GM12878 (cell line): ENCODE measurements at regions of chr6 and their contacts with region 1.

Region 1: GRCh38 chr6:399785-400534 is 8.4 kb downstream of the IRF4 start:
- DNase-seq: no peak
- ATAC-seq: peak; percentile 10
- H3K4me3 ChIP-seq: peak overlapping the region; percentile 61
- H3K27ac ChIP-seq: peak overlapping the region; percentile 39
- H3K4me1 ChIP-seq: peaks cover 35% of the 10 kb centered on the region
- H3K27me3 ChIP-seq: no peaks in the 10 kb centered on the region
- CTCF ChIP-seq: no peak
- EP300 ChIP-seq: peak; percentile 56 to 84; a peak in 2 of 4 replicates
- POLR2A ChIP-seq: peak; percentile 89
- RAD21 ChIP-seq: 0 out of 2 replicates have a peak, but pooled peaks have one; percentile 1

Region 2: GRCh38 chr6:168865-169455 is 231.0 kb before region 1 on chr6:
- CTCF ChIA-PET with region 1: no interaction called
- POLR2A ChIA-PET with region 1: no interaction called
- RAD21 ChIA-PET with region 1: no interaction called
- SMC1A ChIA-PET with region 1: no interaction called
- in situ Hi-C with region 1: no loop called
- intact Hi-C with region 1: no loop called
- DNase-seq: no peak
- ATAC-seq: peak; percentile 71
- H3K4me3 ChIP-seq: no peak overlapping the region
- H3K27ac ChIP-seq: no peak overlapping the region
- H3K4me1 ChIP-seq: no peaks in the 10 kb centered on the region
- H3K27me3 ChIP-seq: no peaks in the 10 kb centered on the region
- CTCF ChIP-seq: peak; percentile 43 to 61 (median 56); a peak in 5 of 6 replicates
- EP300 ChIP-seq: no peak
- POLR2A ChIP-seq: no peak
- RAD21 ChIP-seq: peak; percentile 79

Region 3: DNA sequence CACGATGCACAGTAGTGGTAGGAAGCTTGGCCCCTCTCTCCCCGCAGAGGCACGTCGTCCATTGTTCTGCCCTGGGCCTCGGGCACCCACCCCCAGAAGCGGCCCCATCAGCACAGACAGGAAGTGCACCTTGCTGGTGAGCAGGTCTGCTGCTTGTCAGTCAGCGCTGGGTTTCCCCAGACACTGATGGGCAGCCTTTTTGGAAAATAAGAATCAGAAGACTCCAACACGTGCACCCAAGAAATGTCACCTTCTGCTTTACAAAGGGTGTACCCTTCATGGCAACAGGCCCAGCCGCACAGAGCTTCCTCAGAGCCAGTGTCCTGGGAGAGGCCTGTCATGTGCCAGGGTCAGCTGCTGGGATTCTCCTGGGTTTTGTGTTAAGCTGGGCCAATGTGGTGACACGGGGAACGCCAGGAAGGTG is 43.1 kb before region 1 on chr6:
- CTCF ChIA-PET with region 1: no interaction called
- POLR2A ChIA-PET with region 1: interaction called, 3 read pairs
- RAD21 ChIA-PET with region 1: interaction called, 11 read pairs
- SMC1A ChIA-PET with region 1: interaction called, 9 read pairs
- in situ Hi-C with region 1: no loop called
- intact Hi-C with region 1: no loop called
- DNase-seq: no peak
- ATAC-seq: peak; percentile 80
- H3K4me3 ChIP-seq: no peak overlapping the region
- H3K27ac ChIP-seq: peak overlapping the region; percentile 56
- H3K4me1 ChIP-seq: peaks cover 45% of the 10 kb centered on the region
- H3K27me3 ChIP-seq: no peaks in the 10 kb centered on the region
- CTCF ChIP-seq: no peak
- EP300 ChIP-seq: no peak
- POLR2A ChIP-seq: no peak
- RAD21 ChIP-seq: no peak

Region 4: GRCh38 chr6:364609-365540 is 35.1 kb before region 1 on chr6:
- CTCF ChIA-PET with region 1: no interaction called
- POLR2A ChIA-PET with region 1: interaction called, 7 read pairs
- RAD21 ChIA-PET with region 1: interaction called, 8 read pairs
- SMC1A ChIA-PET with region 1: interaction called, 19 read pairs
- in situ Hi-C with region 1: no loop called
- intact Hi-C with region 1: no loop called
- DNase-seq: peak; percentile 78
- ATAC-seq: peak; percentile 94
- H3K4me3 ChIP-seq: no peak overlapping the region
- H3K27ac ChIP-seq: peak overlapping the region; percentile 33
- H3K4me1 ChIP-seq: peaks cover 25% of the 10 kb centered on the region
- H3K27me3 ChIP-seq: no peaks in the 10 kb centered on the region
- CTCF ChIP-seq: no peak
- EP300 ChIP-seq: peak; percentile 37 to 88; a peak in 2 of 4 replicates
- POLR2A ChIP-seq: no peak
- RAD21 ChIP-seq: 0 out of 2 replicates have a peak, but pooled peaks have one; percentile 2

Region 5: GRCh38 chr6:431986-432385 is 32.0 kb after region 1 on chr6:
- CTCF ChIA-PET with region 1: interaction called, 4 read pairs
- POLR2A ChIA-PET with region 1: interaction called, 3 read pairs
- RAD21 ChIA-PET with region 1: interaction called, 8 read pairs
- SMC1A ChIA-PET with region 1: interaction called, 10 read pairs
- in situ Hi-C with region 1: no loop called
- intact Hi-C with region 1: no loop called
- DNase-seq: no peak
- ATAC-seq: no peak
- H3K4me3 ChIP-seq: no peak overlapping the region
- H3K27ac ChIP-seq: no peak overlapping the region
- H3K4me1 ChIP-seq: peaks cover 35% of the 10 kb centered on the region
- H3K27me3 ChIP-seq: no peaks in the 10 kb centered on the region
- CTCF ChIP-seq: no peak
- EP300 ChIP-seq: no peak
- POLR2A ChIP-seq: no peak
- RAD21 ChIP-seq: no peak

Region 6: GRCh38 chr6:453152-453551 is 53.2 kb after region 1 on chr6:
- CTCF ChIA-PET with region 1: no interaction called
- POLR2A ChIA-PET with region 1: no interaction called
- RAD21 ChIA-PET with region 1: no interaction called
- SMC1A ChIA-PET with region 1: no interaction called
- in situ Hi-C with region 1: no loop called
- intact Hi-C with region 1: no loop called
- DNase-seq: no peak
- ATAC-seq: no peak
- H3K4me3 ChIP-seq: no peak overlapping the region
- H3K27ac ChIP-seq: no peak overlapping the region
- H3K4me1 ChIP-seq: no peaks in the 10 kb centered on the region
- H3K27me3 ChIP-seq: 0 out of 4 replicates have a peak, but pooled peaks cover 0 to 5% of the 10 kb centered on the region in 2 experiments
- CTCF ChIP-seq: no peak
- EP300 ChIP-seq: no peak
- POLR2A ChIP-seq: no peak
- RAD21 ChIP-seq: no peak

Region 7: DNA sequence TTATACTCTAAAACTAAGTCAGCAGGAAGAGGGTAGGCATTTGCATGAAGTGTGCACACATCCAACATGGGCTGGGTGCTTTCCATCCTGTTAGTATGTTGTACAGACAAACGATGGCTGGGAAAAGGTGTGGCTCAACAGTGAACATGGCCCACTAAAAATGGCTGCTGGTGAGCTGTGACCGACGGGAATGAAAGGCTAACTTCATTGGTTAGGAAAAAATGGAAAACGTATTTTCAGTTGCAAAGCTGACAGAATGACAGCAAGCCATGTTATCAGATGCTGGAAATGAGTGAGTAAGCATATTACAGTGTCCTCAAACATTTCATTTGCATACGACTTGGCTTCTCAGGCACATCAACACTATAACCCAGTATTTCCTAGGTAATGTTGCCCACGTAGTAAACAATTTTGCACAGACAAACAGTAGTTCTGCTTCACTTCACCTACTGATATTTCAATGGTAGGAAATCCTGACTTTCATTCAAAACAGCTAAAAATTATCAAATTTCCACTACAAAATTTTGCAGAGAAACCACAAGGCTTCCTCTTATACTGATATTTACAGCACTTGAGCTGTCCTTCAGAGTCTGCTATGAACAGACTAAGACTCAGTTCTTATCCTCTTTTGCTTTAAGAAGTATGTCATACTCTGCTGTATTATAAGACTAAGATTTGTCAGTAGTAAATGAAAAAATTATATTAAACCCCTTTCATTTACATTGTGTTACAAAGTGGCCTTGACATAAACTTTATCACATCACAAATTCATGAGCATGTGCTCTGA is 90.5 kb after region 1 on chr6:
- CTCF ChIA-PET with region 1: interaction called, 4 read pairs
- POLR2A ChIA-PET with region 1: interaction called, 7 read pairs
- RAD21 ChIA-PET with region 1: interaction called, 8 read pairs
- SMC1A ChIA-PET with region 1: interaction called, 11 read pairs
- in situ Hi-C with region 1: no loop called
- intact Hi-C with region 1: loop called (anchors 5 kb)
- DNase-seq: peak; percentile 39
- ATAC-seq: peak; percentile 82
- H3K4me3 ChIP-seq: no peak overlapping the region
- H3K27ac ChIP-seq: peak overlapping the region; percentile 22; the same call in 1 of the 2 replicates
- H3K4me1 ChIP-seq: peaks cover 33% of the 10 kb centered on the region
- H3K27me3 ChIP-seq: no peaks in the 10 kb centered on the region
- CTCF ChIP-seq: no peak
- EP300 ChIP-seq: no peak
- POLR2A ChIP-seq: no peak
- RAD21 ChIP-seq: no peak

Region 8: DNA sequence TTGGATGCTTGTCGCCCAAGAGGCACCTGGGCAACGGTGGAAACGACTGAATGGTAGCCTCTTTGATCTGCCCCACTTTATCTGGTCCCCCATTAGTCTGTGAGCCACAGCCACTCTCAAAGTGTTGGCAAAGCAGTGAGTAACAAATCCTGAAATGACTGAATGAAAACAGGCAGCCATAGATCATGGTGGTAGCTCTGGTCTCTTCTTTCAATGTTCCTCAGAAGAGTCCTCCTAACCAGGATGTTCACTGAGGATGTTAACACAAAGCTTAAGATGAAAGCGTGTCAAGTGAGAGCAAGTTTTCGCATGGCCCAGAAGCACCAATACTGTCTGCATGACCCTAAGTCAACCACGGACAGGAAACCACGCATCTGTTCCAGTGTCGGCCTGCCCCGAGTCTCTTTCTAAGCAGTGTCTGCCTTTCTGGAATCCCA is 98.9 kb after region 1 on chr6:
- CTCF ChIA-PET with region 1: interaction called, 5 read pairs
- POLR2A ChIA-PET with region 1: interaction called, 4 read pairs
- RAD21 ChIA-PET with region 1: interaction called, 6 read pairs
- SMC1A ChIA-PET with region 1: interaction called, 15 read pairs
- in situ Hi-C with region 1: no loop called
- intact Hi-C with region 1: loop called (anchors 5 kb)
- DNase-seq: peak; percentile 69
- ATAC-seq: peak; percentile 77
- H3K4me3 ChIP-seq: peak overlapping the region; percentile 31; the same call in 1 of the 2 replicates
- H3K27ac ChIP-seq: peak overlapping the region; percentile 78
- H3K4me1 ChIP-seq: peaks cover 36% of the 10 kb centered on the region
- H3K27me3 ChIP-seq: no peaks in the 10 kb centered on the region
- CTCF ChIP-seq: no peak
- EP300 ChIP-seq: no peak
- POLR2A ChIP-seq: no peak
- RAD21 ChIP-seq: no peak

Region 9: DNA sequence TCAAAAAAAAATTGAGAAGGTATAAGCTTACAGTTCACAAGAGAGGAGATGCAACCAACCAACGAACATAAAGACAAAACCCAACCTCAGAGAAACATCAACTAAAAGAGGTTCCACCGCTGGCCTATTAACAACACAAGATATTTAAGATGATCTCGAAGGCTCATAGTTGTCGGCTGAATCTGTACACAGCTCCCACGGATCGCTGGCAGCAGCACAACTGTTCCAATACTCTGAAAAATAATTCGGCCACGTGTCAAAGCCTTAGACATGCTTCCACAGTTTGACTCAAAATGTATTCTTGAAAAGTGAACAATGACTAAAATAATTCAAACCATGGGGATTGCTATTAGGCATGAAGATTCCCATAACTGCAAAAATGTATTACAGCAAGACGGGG is 279.3 kb after region 1 on chr6:
- CTCF ChIA-PET with region 1: no interaction called
- POLR2A ChIA-PET with region 1: no interaction called
- RAD21 ChIA-PET with region 1: no interaction called
- SMC1A ChIA-PET with region 1: no interaction called
- in situ Hi-C with region 1: no loop called
- intact Hi-C with region 1: no loop called
- DNase-seq: no peak
- ATAC-seq: no peak
- H3K4me3 ChIP-seq: no peak overlapping the region
- H3K27ac ChIP-seq: no peak overlapping the region
- H3K4me1 ChIP-seq: peaks cover 4% of the 10 kb centered on the region
- H3K27me3 ChIP-seq: no peaks in the 10 kb centered on the region
- CTCF ChIP-seq: no peak
- EP300 ChIP-seq: no peak
- POLR2A ChIP-seq: no peak
- RAD21 ChIP-seq: no peak